A549 (cell line): ENCODE measurements at regions of chr17 and their contacts with region 1.

Region 1: GRCh38 chr17:14926526-14927122 is 338.5 kb downstream of the PMP22 start:
- DNase-seq: peak; percentile 36 to 75
- ATAC-seq: peak; percentile 68 to 71; a peak in 4 of 6 replicates
- H3K4me3 ChIP-seq: no peak overlapping the region
- H3K27ac ChIP-seq: peak overlapping the region in 1 of 2 experiments; percentile 20; a peak in 1 of 6 replicates
- H3K4me1 ChIP-seq: peaks cover 8% of the 10 kb centered on the region; the same call in 1 of the 3 replicates
- CTCF ChIP-seq: peak; percentile 95
- EP300 ChIP-seq: no peak
- POLR2A ChIP-seq: no peak
- RAD21 ChIP-seq: peak; percentile 97

Region 2: DNA sequence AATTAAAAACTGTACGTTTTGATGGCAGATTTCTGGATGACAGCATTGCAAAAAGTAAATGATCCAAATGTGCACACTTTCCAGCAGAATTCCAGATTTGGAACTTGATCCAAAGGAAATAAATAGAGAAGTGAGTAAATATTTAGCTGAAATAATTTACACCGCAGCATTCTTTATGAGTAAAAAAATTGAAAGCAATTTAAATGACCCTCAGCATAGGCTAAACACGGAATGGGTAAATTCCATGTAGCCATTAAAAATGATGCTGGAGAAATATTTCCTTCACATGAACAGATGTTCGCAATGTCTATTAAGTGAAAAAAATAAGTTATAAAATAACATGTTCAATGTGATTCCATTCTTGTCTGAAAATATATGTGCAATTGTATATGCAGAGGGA is 200.9 kb before region 1 on chr17:
- CTCF ChIA-PET with region 1: interaction called, 11 read pairs
- POLR2A ChIA-PET with region 1: no interaction called
- DNase-seq: no peak
- ATAC-seq: no peak
- H3K4me3 ChIP-seq: no peak overlapping the region
- H3K27ac ChIP-seq: no peak overlapping the region
- H3K4me1 ChIP-seq: peaks cover 7% of the 10 kb centered on the region; the same call in 1 of the 3 replicates
- CTCF ChIP-seq: no peak
- EP300 ChIP-seq: no peak
- POLR2A ChIP-seq: no peak
- RAD21 ChIP-seq: no peak

Region 3: DNA sequence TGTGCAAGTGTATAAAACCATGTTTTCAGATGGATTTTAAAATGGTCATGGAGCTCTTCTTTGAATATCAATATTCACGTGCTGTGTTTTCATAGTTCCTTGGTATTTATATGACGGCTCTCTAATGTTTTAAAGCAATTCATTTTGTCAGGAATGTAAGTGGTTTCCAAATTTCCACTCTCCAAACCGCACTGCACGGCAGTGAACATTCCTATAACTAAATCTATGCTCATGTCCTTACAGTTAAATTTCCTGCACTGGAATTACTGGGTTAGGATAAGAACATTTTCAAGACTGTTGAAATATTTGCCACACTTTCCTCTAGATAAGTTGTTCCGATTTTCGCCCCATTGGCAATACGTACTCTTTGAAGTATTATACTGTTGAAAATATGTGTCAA is 60.4 kb before region 1 on chr17:
- CTCF ChIA-PET with region 1: no interaction called
- POLR2A ChIA-PET with region 1: no interaction called
- DNase-seq: no peak
- ATAC-seq: no peak
- H3K4me3 ChIP-seq: no peak overlapping the region
- H3K27ac ChIP-seq: no peak overlapping the region
- H3K4me1 ChIP-seq: no peaks in the 10 kb centered on the region
- CTCF ChIP-seq: no peak
- EP300 ChIP-seq: no peak
- POLR2A ChIP-seq: no peak
- RAD21 ChIP-seq: no peak

Region 4: GRCh38 chr17:14903854-14904253 is 22.8 kb before region 1 on chr17:
- CTCF ChIA-PET with region 1: interaction called, 13 read pairs
- POLR2A ChIA-PET with region 1: no interaction called
- DNase-seq: no peak
- ATAC-seq: no peak
- H3K4me3 ChIP-seq: no peak overlapping the region
- H3K27ac ChIP-seq: no peak overlapping the region
- H3K4me1 ChIP-seq: no peaks in the 10 kb centered on the region
- CTCF ChIP-seq: no peak
- EP300 ChIP-seq: no peak
- POLR2A ChIP-seq: no peak
- RAD21 ChIP-seq: no peak

Region 5: DNA sequence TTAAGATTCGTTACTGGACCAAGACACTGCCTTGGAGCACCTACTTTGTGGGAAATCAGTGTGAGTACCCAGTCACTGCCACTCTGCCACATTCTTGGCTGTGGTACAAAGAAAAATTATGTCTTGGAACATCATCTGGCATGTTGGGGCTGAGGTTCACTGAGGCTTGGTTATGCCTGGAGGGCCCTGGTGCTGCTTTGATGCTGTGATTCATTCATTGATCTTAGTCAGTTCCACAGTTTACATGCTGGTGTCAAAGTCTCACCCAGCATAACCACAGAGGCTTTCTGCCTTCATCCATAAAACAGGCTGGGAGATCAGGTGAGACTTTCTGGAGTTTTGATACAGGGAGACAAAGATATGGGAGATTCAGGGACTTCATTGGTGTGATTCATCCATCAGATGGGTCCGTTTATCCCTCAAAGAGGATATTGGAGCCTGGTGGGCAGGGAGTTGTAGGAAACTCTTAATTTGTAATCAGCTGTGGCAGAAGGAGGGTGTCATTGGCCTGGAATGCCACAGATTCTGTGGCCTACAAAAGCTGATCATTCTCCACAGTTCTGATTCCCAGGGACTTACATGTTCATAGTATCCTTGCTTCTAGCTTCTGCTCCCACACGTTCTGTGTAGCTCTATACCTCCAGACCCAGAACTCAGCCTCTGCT is 16.0 kb after region 1 on chr17:
- CTCF ChIA-PET with region 1: interaction called, 55 read pairs
- POLR2A ChIA-PET with region 1: no interaction called
- DNase-seq: peak in 1 of 2 experiments; percentile 11
- ATAC-seq: no peak
- H3K4me3 ChIP-seq: no peak overlapping the region
- H3K27ac ChIP-seq: no peak overlapping the region
- H3K4me1 ChIP-seq: no peaks in the 10 kb centered on the region
- CTCF ChIP-seq: no peak
- EP300 ChIP-seq: no peak
- POLR2A ChIP-seq: no peak
- RAD21 ChIP-seq: no peak

Region 6: DNA sequence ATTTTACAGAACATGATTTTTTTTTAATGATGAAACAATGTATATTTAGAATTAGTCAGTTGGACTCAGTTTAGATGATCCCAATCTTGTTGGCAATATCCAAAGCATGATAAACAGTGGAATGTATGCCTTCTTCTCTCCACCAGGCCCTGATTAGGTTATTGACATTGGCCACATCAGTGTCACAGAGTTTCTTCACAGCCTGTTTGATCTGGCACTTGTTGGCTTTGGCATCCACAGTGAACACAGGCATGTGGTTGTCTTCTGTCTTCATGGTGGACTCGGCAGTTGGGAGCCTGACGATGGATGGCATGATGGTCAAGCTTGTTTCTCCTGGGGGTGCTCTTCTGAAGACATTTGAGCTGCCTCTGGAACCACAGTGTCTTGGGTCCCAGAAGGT is 21.0 kb after region 1 on chr17:
- CTCF ChIA-PET with region 1: interaction called, 55 read pairs
- POLR2A ChIA-PET with region 1: no interaction called
- DNase-seq: no peak
- ATAC-seq: no peak
- H3K4me3 ChIP-seq: no peak overlapping the region
- H3K27ac ChIP-seq: no peak overlapping the region
- H3K4me1 ChIP-seq: no peaks in the 10 kb centered on the region
- CTCF ChIP-seq: no peak
- EP300 ChIP-seq: no peak
- POLR2A ChIP-seq: no peak
- RAD21 ChIP-seq: no peak

Region 7: GRCh38 chr17:14959106-14959648 is 32.6 kb after region 1 on chr17:
- CTCF ChIA-PET with region 1: interaction called, 10 read pairs
- POLR2A ChIA-PET with region 1: no interaction called
- DNase-seq: no peak
- ATAC-seq: no peak
- H3K4me3 ChIP-seq: no peak overlapping the region
- H3K27ac ChIP-seq: no peak overlapping the region
- H3K4me1 ChIP-seq: no peaks in the 10 kb centered on the region
- CTCF ChIP-seq: no peak
- EP300 ChIP-seq: no peak
- POLR2A ChIP-seq: no peak
- RAD21 ChIP-seq: no peak